ENCODE measurements at regions of chr7 and their contacts with region 1.

Region 1: GRCh38 chr7:46972205-46972604 is 609.7 kb downstream of the TNS3 start:
- DNase-seq: peak; percentile 25
- H3K4me3 Mint-ChIP-seq: no peak overlapping the region
- H3K27ac Mint-ChIP-seq: peak overlapping the region; percentile 100
- H3K4me1 Mint-ChIP-seq: peaks cover 54% of the 10 kb centered on the region
- H3K27me3 Mint-ChIP-seq: no peaks in the 10 kb centered on the region
- CTCF ChIP-seq: no peak

Region 2: DNA sequence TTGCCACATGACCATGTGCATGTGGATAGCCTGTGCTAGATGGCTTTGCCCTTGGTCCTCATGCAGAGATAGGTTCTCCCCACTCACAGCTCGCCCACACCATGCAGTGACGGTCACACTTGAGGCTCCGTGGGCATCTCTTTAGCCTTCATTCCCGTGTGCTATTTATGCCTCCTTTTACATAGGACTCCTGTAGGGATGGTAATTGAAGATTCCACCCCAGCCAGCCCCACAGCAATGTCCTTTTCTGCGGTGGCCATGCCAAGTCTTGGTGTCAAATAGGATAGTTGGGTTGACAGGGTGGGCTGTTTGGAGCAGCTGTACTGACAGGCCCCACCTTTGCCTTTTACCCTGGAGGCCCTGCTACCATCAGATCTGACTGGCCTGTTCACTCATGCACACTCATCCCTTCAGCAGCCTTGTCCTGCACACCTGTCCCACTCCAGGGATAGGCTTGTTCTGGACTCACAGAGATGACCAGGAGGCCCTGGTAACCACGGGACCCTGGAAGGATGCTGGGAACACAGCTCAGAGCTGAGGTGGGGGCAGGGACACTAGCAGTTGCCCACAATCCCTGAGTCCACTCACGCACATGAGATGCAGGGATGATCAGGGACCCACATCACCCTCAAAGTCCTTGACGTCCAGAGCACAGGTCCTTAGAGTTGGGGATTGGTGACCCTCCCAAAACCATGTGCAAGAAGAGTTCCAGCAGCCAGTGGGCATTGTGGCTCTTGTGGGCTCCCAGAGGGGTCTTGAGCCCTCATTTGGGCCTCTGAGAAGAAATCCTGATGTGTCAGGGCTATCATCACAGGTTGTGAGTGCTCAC is 1326.8 kb before region 1 on chr7:
- CTCF ChIA-PET with region 1: interaction called, 11 read pairs
- intact Hi-C with region 1: no loop called
- DNase-seq: no peak
- H3K4me3 Mint-ChIP-seq: no peak overlapping the region
- H3K27ac Mint-ChIP-seq: no peak overlapping the region
- H3K4me1 Mint-ChIP-seq: peaks cover 11% of the 10 kb centered on the region
- H3K27me3 Mint-ChIP-seq: no peaks in the 10 kb centered on the region
- CTCF ChIP-seq: no peak

Region 3: DNA sequence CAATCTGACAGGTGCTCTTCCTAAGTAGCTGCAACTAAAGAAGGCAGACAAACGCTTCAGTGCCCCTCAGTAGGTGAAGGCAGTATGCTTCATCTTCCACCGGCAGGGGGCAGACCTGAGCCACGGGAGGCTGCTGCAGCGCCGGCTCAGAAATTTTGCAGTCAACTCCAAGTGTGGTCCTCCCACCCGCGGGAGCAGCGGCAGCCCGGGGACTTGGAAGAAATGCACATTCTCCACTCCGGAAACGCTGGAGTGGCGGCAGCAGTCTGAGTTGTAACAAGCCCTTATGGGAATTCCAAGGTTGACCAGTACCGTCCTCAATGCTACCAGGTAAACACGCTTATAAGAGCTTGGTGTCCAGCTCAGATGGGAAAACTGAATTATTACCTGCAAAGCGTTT is 1054.5 kb before region 1 on chr7:
- CTCF ChIA-PET with region 1: interaction called, 5 read pairs
- intact Hi-C with region 1: loop called (anchors 10 kb)
- DNase-seq: peak; percentile 97
- H3K4me3 Mint-ChIP-seq: peak overlapping the region; percentile 99
- H3K27ac Mint-ChIP-seq: peak overlapping the region; percentile 8
- H3K4me1 Mint-ChIP-seq: peaks cover 26% of the 10 kb centered on the region
- H3K27me3 Mint-ChIP-seq: no peaks in the 10 kb centered on the region
- CTCF ChIP-seq: peak; percentile 97

Region 4: GRCh38 chr7:46486256-46487206 is 485.7 kb before region 1 on chr7:
- CTCF ChIA-PET with region 1: no interaction called
- intact Hi-C with region 1: loop called (anchors 5 kb)
- DNase-seq: peak; percentile 60
- H3K4me3 Mint-ChIP-seq: peak overlapping the region; percentile 19
- H3K27ac Mint-ChIP-seq: peak overlapping the region; percentile 83
- H3K4me1 Mint-ChIP-seq: peaks cover 50% of the 10 kb centered on the region
- H3K27me3 Mint-ChIP-seq: no peaks in the 10 kb centered on the region
- CTCF ChIP-seq: no peak

Region 5: DNA sequence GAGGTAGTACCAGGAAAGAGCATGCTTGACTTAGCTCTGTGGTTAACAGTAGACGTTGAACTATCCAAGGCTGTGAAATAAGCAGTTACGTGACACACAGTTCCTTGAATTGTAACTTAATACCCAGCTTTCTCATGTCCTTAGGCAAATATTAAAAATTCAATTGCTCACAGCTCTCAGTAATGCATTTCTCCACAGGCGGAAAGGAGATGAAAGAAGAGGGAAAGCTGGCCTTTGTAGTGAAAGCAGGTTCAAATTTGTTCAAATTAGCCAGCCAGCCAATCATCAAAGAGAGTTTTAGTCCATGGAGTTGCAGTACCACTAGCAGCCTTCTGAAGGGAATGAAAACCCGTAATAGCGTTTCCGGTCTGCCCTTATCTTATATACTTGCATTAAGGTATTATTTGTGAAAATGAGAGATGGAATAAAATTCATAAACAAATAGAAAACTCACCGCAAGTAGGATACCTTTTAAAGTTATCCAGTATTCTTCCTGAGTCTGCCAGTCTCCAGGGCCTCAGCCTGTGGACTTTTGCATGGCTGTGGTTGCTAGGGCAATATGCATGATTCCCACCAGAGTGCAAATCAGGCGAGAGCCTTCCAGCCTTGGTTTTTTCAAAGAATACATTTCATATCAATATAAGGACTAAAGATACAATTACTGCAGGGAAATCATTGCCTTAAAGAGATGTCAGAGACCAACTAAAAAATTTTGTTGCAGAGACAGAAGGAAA is 185.8 kb before region 1 on chr7:
- CTCF ChIA-PET with region 1: interaction called, 4 read pairs
- intact Hi-C with region 1: loop called (anchors 1 kb)
- DNase-seq: peak; percentile 69
- H3K4me3 Mint-ChIP-seq: peak overlapping the region; percentile 45
- H3K27ac Mint-ChIP-seq: peak overlapping the region; percentile 95
- H3K4me1 Mint-ChIP-seq: peaks cover 29% of the 10 kb centered on the region
- H3K27me3 Mint-ChIP-seq: no peaks in the 10 kb centered on the region
- CTCF ChIP-seq: no peak

Region 6: GRCh38 chr7:46802479-46802878 is 169.7 kb before region 1 on chr7:
- CTCF ChIA-PET with region 1: no interaction called
- intact Hi-C with region 1: no loop called
- DNase-seq: no peak
- H3K4me3 Mint-ChIP-seq: no peak overlapping the region
- H3K27ac Mint-ChIP-seq: no peak overlapping the region
- H3K4me1 Mint-ChIP-seq: no peaks in the 10 kb centered on the region
- H3K27me3 Mint-ChIP-seq: no peaks in the 10 kb centered on the region
- CTCF ChIP-seq: no peak

Region 7: DNA sequence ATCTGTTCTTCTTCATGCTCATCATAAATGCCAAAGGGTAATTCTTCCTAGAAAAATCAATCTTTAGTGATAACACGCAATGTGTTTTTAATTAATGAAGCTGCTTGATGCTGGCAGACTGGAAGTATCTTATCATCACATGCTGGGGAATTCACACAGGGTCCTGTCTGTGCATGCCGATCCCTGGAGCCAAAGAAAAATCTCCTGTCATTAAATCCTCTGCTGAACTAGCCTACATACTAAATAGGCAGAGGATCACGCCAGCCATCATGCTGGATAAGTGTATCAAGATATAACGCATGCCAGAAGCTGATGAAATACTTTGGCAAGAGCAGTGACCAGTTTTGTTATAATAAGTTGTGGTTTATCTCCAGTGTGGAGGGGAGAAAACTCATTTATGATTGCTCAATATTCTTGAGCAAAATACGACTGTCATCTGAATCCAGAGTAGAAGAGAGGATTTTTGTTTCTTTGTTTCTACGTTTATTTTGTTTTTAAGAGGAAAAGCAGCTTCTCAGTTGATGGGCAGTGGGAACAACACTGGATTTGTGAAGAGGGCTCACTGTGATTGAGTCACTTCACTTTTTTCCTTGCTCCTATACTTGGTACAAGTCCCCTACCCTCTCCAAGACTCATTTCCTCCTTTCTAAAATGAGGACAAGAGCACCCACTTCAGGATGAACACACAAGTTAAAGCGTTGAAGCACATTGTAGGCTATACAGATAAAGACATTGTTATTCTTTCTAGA is 39.4 kb before region 1 on chr7:
- CTCF ChIA-PET with region 1: no interaction called
- intact Hi-C with region 1: loop called (anchors 2 kb)
- DNase-seq: peak; percentile 41
- H3K4me3 Mint-ChIP-seq: peak overlapping the region; percentile 18
- H3K27ac Mint-ChIP-seq: peak overlapping the region; percentile 99
- H3K4me1 Mint-ChIP-seq: peaks cover 59% of the 10 kb centered on the region
- H3K27me3 Mint-ChIP-seq: no peaks in the 10 kb centered on the region
- CTCF ChIP-seq: no peak

Measured in Calu3 (cell line).